ENCODE measurements at regions of chr19 and their contacts with region 1.

Region 1: GRCh38 chr19:17579661-17580244 is 24.3 kb downstream of the COLGALT1 start:
- DNase-seq: peak; percentile 87 to 95
- H3K4me3 ChIP-seq: peak overlapping the region; percentile 23 to 46 (median 36); a peak in 5 of 8 replicates
- H3K27ac ChIP-seq: 0 out of 2 replicates have a peak overlapping the region, but pooled peaks have one; percentile 13
- H3K4me1 ChIP-seq: peaks cover 0 to 18% (median 14%) of the 10 kb centered on the region in 4 experiments; a peak in 6 of 7 replicates
- H3K27me3 ChIP-seq: no peaks in the 10 kb centered on the region
- CTCF ChIP-seq: no peak
- EP300 ChIP-seq: no peak
- POLR2A ChIP-seq: no peak; a peak in 1 of 3 replicates
- RAD21 ChIP-seq: no peak

Region 2: DNA sequence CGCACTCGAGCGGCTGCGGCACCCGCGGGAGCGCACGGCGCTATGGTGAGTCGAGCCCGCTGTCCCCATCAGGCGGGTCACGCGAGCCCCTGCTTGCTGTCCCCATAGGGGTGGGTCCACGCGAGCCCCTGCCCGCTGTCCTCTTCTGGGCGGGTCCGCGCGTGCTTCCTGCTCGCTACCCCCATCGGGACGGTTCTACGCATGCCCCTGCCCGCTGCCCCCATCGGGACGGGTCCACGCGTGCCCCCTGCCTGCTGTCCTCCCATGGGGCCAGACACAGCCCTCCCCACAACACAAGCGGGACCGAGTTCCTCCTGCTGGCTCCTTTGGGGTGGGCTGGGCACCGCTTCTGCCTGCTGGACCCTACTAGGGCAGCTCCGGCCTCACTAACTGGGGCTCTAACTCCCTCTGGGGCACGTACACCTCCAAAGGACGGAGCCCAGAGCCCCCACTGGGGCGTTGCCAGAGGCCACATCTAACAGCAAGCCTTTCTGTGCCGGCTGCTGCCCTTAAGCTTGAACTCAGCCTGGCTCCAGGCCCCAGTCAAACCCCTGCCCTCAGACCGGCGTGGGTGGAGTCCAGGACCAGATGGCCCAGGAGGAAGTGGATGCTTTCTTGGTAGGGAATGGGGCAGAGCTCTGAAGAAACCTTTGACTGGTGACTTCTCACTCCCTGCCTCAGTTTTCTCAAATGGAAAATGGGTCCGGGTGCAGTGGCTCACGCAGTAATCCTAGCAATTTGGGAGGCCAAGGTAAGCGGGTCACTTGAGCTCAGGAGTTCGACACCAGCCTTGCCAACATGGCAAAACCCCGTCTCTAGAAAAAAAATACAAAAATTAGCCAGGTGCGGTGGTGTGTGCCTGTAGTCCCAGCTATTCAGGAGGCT is 23.6 kb before region 1 on chr19:
- CTCF ChIA-PET with region 1: interaction called, 28 read pairs
- POLR2A ChIA-PET with region 1: no interaction called
- DNase-seq: peak in 1 of 2 experiments; percentile 67
- H3K4me3 ChIP-seq: peak overlapping the region; percentile 65 to 84 (median 66)
- H3K27ac ChIP-seq: no peak overlapping the region
- H3K4me1 ChIP-seq: peaks cover 0 to 7% (median 3%) of the 10 kb centered on the region in 4 experiments; a peak in 5 of 7 replicates
- H3K27me3 ChIP-seq: peaks cover 0 to 7% (median 2%) of the 10 kb centered on the region in 4 experiments; a peak in 2 of 7 replicates
- CTCF ChIP-seq: 0 out of 4 replicates have a peak, but pooled peaks of 1 of the 3 experiments have one; percentile 4
- EP300 ChIP-seq: no peak
- POLR2A ChIP-seq: no peak
- RAD21 ChIP-seq: peak in 1 of 2 experiments; percentile 27; a peak in 1 of 4 replicates

Region 3: DNA sequence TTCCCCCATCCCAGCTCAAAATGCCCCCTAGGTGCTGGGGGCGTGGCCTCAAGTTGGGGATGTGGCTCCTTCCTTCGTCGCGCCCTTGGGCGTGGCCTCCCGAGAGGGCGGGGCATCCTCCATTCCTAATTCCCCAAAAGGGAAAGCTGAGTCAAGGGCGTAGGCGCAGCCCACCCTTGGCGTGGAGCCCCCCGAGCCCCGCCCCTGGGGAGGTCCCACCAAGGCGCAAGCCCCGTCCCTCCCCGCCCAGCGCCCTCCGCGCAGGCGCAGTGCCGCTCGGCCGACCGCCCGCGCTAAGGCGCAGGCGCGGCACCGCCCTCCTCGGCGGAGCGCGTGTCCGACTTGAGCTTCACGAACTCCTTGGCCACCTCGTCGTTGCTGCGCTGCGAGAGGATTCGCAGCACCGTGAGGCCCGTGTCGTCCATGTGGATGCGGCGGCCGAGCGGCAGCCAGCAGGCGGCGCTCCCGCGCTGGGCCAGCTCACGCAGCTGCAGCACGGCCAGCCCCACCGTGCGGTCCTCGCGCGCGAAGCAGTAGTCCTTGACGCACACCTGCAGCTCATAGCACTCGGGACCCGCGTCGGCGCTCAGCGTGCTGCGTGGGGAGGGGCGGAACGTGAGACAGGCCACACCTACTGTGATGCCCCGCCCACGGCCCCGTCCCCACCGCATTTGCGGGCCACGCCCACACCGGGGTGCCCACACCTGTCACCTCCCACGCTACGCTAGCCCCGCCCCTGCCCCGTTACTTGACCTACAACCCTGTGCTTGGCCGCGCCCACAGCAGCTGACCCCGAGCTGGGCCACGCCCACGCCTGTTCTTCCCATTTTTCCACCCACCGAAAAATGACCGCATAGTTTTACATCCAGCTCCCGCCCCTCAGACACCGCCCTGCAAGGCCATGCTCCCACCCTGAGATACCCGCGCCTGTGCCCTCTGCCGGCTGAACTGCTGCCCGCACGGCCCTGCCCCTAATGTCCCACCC is 26.3 kb after region 1 on chr19:
- CTCF ChIA-PET with region 1: interaction called, 30 read pairs
- POLR2A ChIA-PET with region 1: interaction called, 6 read pairs
- DNase-seq: peak; percentile 97 to 98
- H3K4me3 ChIP-seq: peak overlapping the region; percentile 8 to 58 (median 46)
- H3K27ac ChIP-seq: peak overlapping the region; percentile 93
- H3K4me1 ChIP-seq: peaks cover 0 to 18% (median 9%) of the 10 kb centered on the region in 4 experiments; a peak in 5 of 7 replicates
- H3K27me3 ChIP-seq: no peaks in the 10 kb centered on the region; a peak in 1 of 7 replicates
- CTCF ChIP-seq: peak; percentile 85 to 90 (median 87)
- EP300 ChIP-seq: no peak
- POLR2A ChIP-seq: peak; percentile 68 to 76
- RAD21 ChIP-seq: peak; percentile 42 to 53; a peak in 3 of 4 replicates

Measured in H1 (cell line).